ENCODE measurements at regions of chr1 and their contacts with region 1.

Region 1: GRCh38 chr1:164602480-164603093 is 43.6 kb downstream of the PBX1 start:
- DNase-seq: peak; percentile 40 to 85 (median 83)
- ATAC-seq: peak; percentile 73 to 81
- H3K4me3 ChIP-seq: no peak overlapping the region
- H3K27ac ChIP-seq: peak overlapping the region; percentile 40
- H3K4me1 ChIP-seq: peaks cover 7% of the 10 kb centered on the region
- H3K27me3 ChIP-seq: no peaks in the 10 kb centered on the region

Region 2: GRCh38 chr1:164565357-164565756 is 37.2 kb before region 1 on chr1:
- intact Hi-C with region 1: loop called in 1 of 4 experiments (anchors 5 kb)
- DNase-seq: no peak
- ATAC-seq: no peak
- H3K4me3 ChIP-seq: peak overlapping the region; percentile 43
- H3K27ac ChIP-seq: peak overlapping the region; percentile 92
- H3K4me1 ChIP-seq: peaks cover 2% of the 10 kb centered on the region
- H3K27me3 ChIP-seq: no peaks in the 10 kb centered on the region

Region 3: DNA sequence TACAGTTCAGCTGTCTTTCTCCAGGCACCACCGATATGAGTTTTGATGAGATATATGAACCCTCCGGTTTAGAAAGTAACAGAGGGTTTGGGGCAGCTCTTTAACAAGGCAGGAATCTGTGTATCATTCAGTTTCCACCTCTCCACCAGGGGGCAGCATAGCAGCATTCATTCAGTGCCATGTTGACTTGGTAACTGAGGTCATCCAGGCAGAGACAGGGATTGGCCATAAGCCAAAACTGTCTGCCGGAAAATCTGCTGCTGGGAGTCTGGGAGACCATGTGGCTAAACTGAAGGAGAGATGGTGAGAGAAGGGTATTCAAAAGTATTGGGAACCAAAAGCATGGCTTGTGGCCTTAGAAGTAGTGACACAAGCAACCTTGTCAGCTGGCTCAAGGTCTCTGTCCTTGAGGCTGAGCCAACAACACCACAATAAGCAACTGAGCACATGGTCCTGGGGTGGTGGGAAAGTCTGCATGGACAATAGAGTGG is 655.4 kb after region 1 on chr1:
- intact Hi-C with region 1: no loop called
- DNase-seq: peak; percentile 44 to 62 (median 49)
- ATAC-seq: peak in 1 of 2 donors; percentile 43
- H3K4me3 ChIP-seq: no peak overlapping the region
- H3K27ac ChIP-seq: no peak overlapping the region
- H3K4me1 ChIP-seq: no peaks in the 10 kb centered on the region
- H3K27me3 ChIP-seq: peaks cover 4% of the 10 kb centered on the region